CD4-positive, alpha-beta T cell (primary cell): ENCODE measurements at regions of chr2 and their contacts with region 1.

Region 1: DNA sequence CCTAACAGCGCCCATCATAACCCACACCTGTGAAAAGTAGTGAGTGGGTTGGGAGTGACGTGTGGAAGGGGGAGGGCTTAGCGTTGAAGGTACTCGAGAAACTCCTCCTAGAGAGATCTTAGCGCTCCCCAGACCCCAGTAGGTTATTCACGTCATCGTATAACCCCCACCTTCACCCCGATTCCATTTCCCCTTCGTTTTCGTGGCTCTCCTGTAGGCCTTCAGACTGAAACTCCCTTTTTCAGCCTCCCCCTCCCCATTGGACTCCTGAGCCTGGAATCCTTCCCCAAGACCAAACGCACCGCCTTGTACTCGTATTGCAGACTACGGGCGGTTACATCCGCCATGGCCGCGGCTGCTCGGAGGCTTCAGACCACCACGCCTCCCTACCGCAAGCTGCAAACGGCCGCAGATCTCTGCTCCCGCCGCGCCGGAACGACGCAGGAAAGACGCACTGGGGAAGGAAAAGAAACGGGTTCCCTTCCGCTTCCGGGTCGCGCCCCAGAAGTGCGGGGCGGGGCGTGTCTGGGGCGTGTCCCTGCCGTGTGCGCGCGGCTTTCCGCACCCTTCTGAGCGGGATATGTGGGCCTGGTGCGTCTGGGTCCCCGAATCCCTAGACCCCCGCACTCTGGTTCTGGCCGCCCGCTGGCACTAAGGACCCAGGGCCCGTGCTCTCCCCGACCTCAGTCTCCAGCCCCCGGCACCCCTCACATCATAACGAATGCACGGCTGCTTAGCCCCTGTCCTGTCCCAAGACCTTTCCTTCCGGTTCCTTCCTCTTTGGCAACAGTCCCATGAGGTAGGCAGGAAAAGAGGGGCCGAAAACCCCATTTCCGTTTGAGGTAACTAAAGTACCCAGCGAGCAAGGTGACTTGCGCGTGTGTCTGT is at the start of gene SNRNP200:
- DNase-seq: peak; percentile 83 to 97 (median 88)
- ATAC-seq: peak; percentile 83
- H3K4me3 ChIP-seq: peak within 1 kb of the TSS; percentile 100
- H3K4me3 Mint-ChIP-seq: peak within 1 kb of the TSS; percentile 94
- H3K27ac ChIP-seq: peak within 1 kb of the TSS; percentile 97
- H3K27ac Mint-ChIP-seq: peak within 1 kb of the TSS; percentile 97
- H3K4me1 ChIP-seq: peaks cover 48% of the 10 kb centered on the region
- H3K4me1 Mint-ChIP-seq: peaks cover 58% of the 10 kb centered on the region
- H3K27me3 ChIP-seq: no peaks in the 10 kb centered on the region
- H3K27me3 Mint-ChIP-seq: no peaks in the 10 kb centered on the region
- CTCF ChIP-seq: no peak
- total RNA-seq, gene SNRNP200: 274 to 297 TPM

Region 2: DNA sequence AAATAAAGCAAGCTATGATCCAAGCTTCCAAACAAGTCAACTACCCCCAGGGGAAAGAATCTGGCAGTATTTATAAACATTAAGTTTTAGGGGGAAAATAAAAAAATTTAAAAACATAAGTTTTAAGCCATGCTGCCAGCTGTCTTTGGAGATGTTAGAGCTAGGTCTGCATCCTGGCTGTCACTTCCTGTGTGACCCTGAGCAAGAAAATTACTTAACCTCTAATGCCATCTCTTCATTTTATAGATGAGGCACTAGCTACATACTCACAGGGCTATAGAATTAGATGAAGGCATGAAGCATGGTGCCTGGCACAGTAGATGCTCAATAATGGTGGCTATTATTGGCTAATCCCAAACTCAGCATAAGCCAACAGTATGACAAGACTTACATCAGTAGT is 124.8 kb before region 1 on chr2:
- CTCF ChIA-PET with region 1: no interaction called
- POLR2A ChIA-PET with region 1: no interaction called
- intact Hi-C with region 1: no loop called
- DNase-seq: no peak
- ATAC-seq: no peak
- H3K4me3 ChIP-seq: no peak overlapping the region
- H3K4me3 Mint-ChIP-seq: no peak overlapping the region
- H3K27ac ChIP-seq: no peak overlapping the region
- H3K27ac Mint-ChIP-seq: no peak overlapping the region
- H3K4me1 ChIP-seq: peaks cover 4% of the 10 kb centered on the region
- H3K4me1 Mint-ChIP-seq: peaks cover 5% of the 10 kb centered on the region
- H3K27me3 ChIP-seq: no peaks in the 10 kb centered on the region
- H3K27me3 Mint-ChIP-seq: no peaks in the 10 kb centered on the region
- CTCF ChIP-seq: no peak

Region 3: GRCh38 chr2:96208143-96209010 is 97.0 kb before region 1 on chr2 and contains the start of gene STARD7:
- CTCF ChIA-PET with region 1: no interaction called
- POLR2A ChIA-PET with region 1: interaction called, 13 read pairs
- intact Hi-C with region 1: no loop called
- DNase-seq: peak; percentile 94 to 98 (median 96)
- ATAC-seq: peak; percentile 87
- H3K4me3 ChIP-seq: peak within 1 kb of the TSS; percentile 85
- H3K4me3 Mint-ChIP-seq: peak within 1 kb of the TSS; percentile 96
- H3K27ac ChIP-seq: peak within 1 kb of the TSS; percentile 57 to 87
- H3K27ac Mint-ChIP-seq: peak within 1 kb of the TSS; percentile 89
- H3K4me1 ChIP-seq: peaks cover 49% of the 10 kb centered on the region
- H3K4me1 Mint-ChIP-seq: peaks cover 57% of the 10 kb centered on the region
- H3K27me3 ChIP-seq: no peaks in the 10 kb centered on the region
- H3K27me3 Mint-ChIP-seq: no peaks in the 10 kb centered on the region
- CTCF ChIP-seq: peak; percentile 17
- total RNA-seq, gene STARD7: 57.4 to 58.6 TPM

Region 4: DNA sequence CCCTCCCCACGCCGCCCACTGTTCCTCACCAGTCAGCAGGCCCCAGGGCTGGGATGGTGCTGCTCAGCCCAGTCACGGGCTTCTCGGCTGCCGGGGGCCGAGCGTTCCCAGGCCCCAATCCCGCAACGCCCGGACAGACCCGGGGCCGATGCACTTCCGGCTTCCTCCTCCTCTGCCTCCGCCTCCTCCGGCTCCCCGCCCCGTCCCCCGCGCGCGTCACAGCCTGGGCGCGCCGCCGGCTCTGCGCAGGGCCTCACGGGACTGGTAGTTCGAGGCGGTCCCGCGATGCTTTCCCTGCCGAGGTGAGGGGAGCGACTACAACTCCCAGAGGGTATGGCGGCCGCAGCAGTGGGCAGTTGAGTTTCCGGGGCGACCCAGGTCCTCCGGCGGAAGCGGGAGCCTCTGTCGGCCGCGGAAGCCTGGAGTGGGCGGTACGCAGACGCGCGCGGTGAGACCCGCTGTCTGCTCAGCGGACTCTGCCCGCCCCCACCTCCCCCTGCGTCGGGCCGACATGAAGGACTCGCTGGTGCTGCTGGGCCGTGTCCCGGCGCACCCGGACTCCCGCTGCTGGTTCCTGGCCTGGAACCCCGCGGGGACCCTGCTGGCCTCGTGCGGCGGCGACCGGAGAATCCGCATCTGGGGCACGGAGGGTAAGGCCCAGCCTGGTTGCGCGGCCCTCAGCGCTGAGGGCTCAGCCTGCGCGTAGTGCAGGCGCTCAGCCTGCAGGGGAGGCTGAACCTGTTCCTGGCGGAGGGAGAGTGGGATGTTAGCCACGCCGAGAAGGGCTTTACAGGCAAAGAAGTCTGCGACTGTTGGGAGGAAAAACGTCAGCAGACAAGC is 39.3 kb before region 1 on chr2 and contains the starts of genes CIAO1 and TMEM127:
- CTCF ChIA-PET with region 1: interaction called, 9 read pairs
- POLR2A ChIA-PET with region 1: interaction called, 3 read pairs
- intact Hi-C with region 1: loop called (anchors 1 kb)
- DNase-seq: peak; percentile 95 to 99 (median 97)
- ATAC-seq: peak; percentile 92
- H3K4me3 ChIP-seq: peak within 1 kb of the TSS; percentile 86
- H3K4me3 Mint-ChIP-seq: peak within 1 kb of the TSS; percentile 92
- H3K27ac ChIP-seq: peak within 1 kb of the TSS; percentile 85 to 87
- H3K27ac Mint-ChIP-seq: peak within 1 kb of the TSS; percentile 82
- H3K4me1 ChIP-seq: peaks cover 51% of the 10 kb centered on the region
- H3K4me1 Mint-ChIP-seq: peaks cover 43% of the 10 kb centered on the region
- H3K27me3 ChIP-seq: no peaks in the 10 kb centered on the region
- H3K27me3 Mint-ChIP-seq: no peaks in the 10 kb centered on the region
- CTCF ChIP-seq: no peak
- total RNA-seq, gene CIAO1: 55.4 to 55.6 TPM
- total RNA-seq, gene TMEM127: 34.2 to 36.0 TPM

Region 5: DNA sequence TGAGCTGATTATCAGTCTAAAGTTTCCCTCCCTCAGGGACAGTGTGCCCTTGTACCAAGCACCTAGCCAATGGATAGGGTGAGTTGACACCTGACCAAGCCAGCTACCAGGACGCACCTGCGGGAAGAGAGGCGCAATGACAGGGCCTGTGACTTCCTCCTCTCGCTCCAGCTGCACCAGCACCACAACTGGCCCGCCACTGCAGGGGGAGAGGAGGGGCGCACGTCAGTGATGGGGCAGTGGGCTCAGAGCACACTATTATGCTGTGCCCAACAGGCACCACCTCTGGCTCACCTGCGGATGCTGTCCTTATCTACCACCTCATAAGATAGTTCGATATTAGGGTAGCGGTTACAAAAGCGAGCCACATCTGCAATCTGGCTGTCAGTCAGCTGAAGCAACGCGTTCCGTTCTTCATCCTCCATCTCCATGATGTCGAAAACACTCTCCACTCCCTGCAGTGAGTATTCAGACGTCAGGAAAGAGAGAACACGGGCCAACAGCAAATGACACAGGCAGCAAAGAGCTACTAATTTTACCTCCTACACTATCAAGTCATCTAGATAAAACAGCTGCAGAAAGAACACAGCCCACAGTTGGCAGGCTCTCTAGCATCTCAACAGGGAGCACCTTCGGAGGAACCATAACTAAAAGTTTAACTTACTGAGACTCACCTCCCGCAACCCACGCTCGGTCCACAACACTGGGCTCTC is 28.4 kb before region 1 on chr2:
- CTCF ChIA-PET with region 1: no interaction called
- POLR2A ChIA-PET with region 1: no interaction called
- intact Hi-C with region 1: no loop called
- DNase-seq: no peak
- ATAC-seq: no peak
- H3K4me3 ChIP-seq: no peak overlapping the region
- H3K4me3 Mint-ChIP-seq: no peak overlapping the region
- H3K27ac ChIP-seq: no peak overlapping the region
- H3K27ac Mint-ChIP-seq: no peak overlapping the region
- H3K4me1 ChIP-seq: no peaks in the 10 kb centered on the region
- H3K4me1 Mint-ChIP-seq: no peaks in the 10 kb centered on the region
- H3K27me3 ChIP-seq: no peaks in the 10 kb centered on the region
- H3K27me3 Mint-ChIP-seq: no peaks in the 10 kb centered on the region
- CTCF ChIP-seq: no peak

Region 6: GRCh38 chr2:96320728-96321622 is 15.6 kb after region 1 on chr2:
- CTCF ChIA-PET with region 1: interaction called, 6 read pairs
- POLR2A ChIA-PET with region 1: interaction called, 59 read pairs
- intact Hi-C with region 1: loop called in 1 of 2 experiments (anchors 1 kb)
- DNase-seq: peak in 6 of 14 experiments; percentile 1 to 50 (median 24)
- ATAC-seq: no peak
- H3K4me3 ChIP-seq: peak overlapping the region; percentile 92
- H3K4me3 Mint-ChIP-seq: peak overlapping the region; percentile 84
- H3K27ac ChIP-seq: peak overlapping the region in 1 of 2 donors; percentile 63
- H3K27ac Mint-ChIP-seq: peak overlapping the region; percentile 16
- H3K4me1 ChIP-seq: peaks cover 64% of the 10 kb centered on the region
- H3K4me1 Mint-ChIP-seq: peaks cover 46% of the 10 kb centered on the region
- H3K27me3 ChIP-seq: no peaks in the 10 kb centered on the region
- H3K27me3 Mint-ChIP-seq: peaks cover 3% of the 10 kb centered on the region
- CTCF ChIP-seq: no peak

Region 7: DNA sequence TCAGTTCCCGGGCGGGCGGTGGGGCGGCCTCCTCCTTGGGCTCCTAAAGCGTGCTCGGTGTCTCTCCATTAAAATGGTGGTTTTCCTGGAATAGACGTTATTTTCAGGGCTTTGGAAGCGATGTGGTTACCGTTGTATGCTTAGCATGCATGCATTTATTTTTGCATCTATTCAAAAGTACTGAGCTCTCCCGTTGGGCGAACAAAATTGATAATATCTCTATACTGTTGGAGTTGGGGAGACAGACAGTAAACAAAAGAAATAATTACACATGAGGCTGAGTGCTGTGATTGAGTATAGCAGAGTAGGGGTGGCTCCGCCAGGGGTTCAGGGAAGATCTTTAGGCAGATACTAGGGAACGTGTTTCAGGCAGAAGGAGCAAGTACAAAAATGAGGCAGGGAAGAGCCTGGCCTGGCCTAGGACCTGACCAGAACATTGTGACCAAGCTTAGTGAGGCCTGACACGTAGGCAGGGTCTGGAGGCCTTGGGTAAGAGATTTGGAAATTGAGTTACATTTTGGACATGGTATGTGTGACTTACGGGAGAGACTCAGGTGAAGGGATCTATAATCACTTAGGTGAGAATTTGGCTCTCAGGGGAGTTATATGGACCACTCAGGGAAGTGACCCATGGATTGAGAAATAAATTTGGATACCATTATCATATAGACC is 30.9 kb after region 1 on chr2:
- CTCF ChIA-PET with region 1: interaction called, 3 read pairs
- POLR2A ChIA-PET with region 1: interaction called, 17 read pairs
- intact Hi-C with region 1: loop called in 1 of 2 experiments (anchors 1 kb)
- DNase-seq: no peak
- ATAC-seq: no peak
- H3K4me3 ChIP-seq: peak overlapping the region; percentile 78
- H3K4me3 Mint-ChIP-seq: peak overlapping the region; percentile 60
- H3K27ac ChIP-seq: peak overlapping the region in 1 of 2 donors; percentile 85
- H3K27ac Mint-ChIP-seq: peak overlapping the region; percentile 54
- H3K4me1 ChIP-seq: peaks cover 22% of the 10 kb centered on the region
- H3K4me1 Mint-ChIP-seq: peaks cover 32% of the 10 kb centered on the region
- H3K27me3 ChIP-seq: no peaks in the 10 kb centered on the region
- H3K27me3 Mint-ChIP-seq: no peaks in the 10 kb centered on the region
- CTCF ChIP-seq: no peak

Region 8: DNA sequence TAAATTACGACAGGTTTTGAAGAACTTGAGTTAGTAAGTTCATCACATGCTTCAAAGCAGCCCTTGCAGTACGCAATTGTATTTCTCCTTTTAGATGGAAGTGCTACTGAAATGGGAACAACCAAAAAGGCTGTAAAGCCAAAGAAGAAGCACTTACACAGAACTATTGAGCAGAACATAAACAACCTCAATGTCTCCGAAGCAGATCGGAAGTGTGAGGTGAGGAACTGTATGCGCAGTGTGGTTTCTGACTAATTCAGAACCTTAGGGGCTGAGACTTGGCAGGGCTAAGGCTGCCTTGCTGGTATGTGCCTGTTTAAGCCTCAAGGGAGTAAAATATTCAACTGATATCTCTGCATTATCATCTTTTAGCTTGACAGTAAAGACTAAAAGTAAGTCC is 38.7 kb after region 1 on chr2:
- CTCF ChIA-PET with region 1: interaction called, 6 read pairs
- POLR2A ChIA-PET with region 1: interaction called, 8 read pairs
- intact Hi-C with region 1: loop called in 1 of 2 experiments (anchors 2 kb)
- DNase-seq: peak in 11 of 14 experiments; percentile 27 to 84 (median 42)
- ATAC-seq: peak; percentile 84
- H3K4me3 ChIP-seq: no peak overlapping the region
- H3K4me3 Mint-ChIP-seq: no peak overlapping the region
- H3K27ac ChIP-seq: peak overlapping the region in 1 of 2 donors; percentile 49
- H3K27ac Mint-ChIP-seq: peak overlapping the region; percentile 80
- H3K4me1 ChIP-seq: peaks cover 31% of the 10 kb centered on the region
- H3K4me1 Mint-ChIP-seq: peaks cover 29% of the 10 kb centered on the region
- H3K27me3 ChIP-seq: no peaks in the 10 kb centered on the region
- H3K27me3 Mint-ChIP-seq: no peaks in the 10 kb centered on the region
- CTCF ChIP-seq: no peak

Region 9: DNA sequence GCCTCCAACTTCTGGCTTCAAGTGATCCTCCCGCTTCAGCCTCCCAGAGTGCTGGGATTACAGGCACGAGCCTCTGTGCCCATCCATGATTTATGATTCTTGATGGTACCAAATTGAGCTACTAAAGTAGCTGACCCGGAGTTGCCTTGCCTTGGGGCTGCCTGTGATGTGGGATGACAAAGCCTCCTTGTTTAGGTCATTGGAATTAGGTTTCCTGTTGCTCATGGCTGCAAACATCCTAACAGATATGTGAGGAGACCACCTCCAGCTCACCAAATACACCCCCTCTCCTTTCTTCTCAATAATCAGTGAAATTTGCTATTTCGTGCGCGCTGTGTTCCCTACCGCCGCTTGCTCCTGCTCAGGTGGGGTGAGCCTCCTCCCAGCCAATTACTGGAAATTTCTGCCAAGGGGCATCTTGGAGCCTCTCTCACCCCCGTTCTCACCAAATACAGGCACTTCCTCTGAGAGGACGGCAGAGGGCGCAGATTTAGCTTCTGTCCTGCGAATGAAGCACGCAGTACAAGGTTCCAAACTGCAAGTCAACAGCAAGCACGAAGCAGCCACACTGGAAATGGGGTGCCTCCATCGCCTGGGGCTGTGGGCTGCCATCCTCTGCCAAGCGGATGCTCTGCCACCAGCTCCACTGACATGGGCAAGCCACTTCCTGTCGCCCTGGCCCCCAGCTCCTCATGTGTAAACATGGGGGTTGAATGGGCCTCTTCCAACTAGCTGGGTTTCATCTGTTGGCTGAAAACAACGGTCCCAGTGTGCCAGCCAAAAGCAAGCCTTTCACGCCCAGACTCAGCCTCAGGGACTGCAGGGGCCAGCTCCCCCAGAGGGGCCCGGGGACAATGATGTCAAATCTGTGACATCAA is 101.9 kb after region 1 on chr2:
- CTCF ChIA-PET with region 1: interaction called, 8 read pairs
- POLR2A ChIA-PET with region 1: interaction called, 22 read pairs
- intact Hi-C with region 1: loop called in 1 of 2 experiments (anchors 5 kb)
- DNase-seq: peak; percentile 58 to 91 (median 76)
- ATAC-seq: peak; percentile 93
- H3K4me3 ChIP-seq: no peak overlapping the region
- H3K4me3 Mint-ChIP-seq: peak overlapping the region; percentile 79
- H3K27ac ChIP-seq: peak overlapping the region; percentile 33 to 35
- H3K27ac Mint-ChIP-seq: peak overlapping the region; percentile 84
- H3K4me1 ChIP-seq: peaks cover 38% of the 10 kb centered on the region
- H3K4me1 Mint-ChIP-seq: peaks cover 41% of the 10 kb centered on the region
- H3K27me3 ChIP-seq: no peaks in the 10 kb centered on the region
- H3K27me3 Mint-ChIP-seq: no peaks in the 10 kb centered on the region
- CTCF ChIP-seq: peak; percentile 74